CD4-positive, alpha-beta memory T cell (primary cell): ENCODE measurements at regions of chr20 and their contacts with region 1.

Region 1: GRCh38 chr20:37527638-37528441 is at the start of gene BLCAP:
- DNase-seq: peak; percentile 96 to 97 (median 96)
- H3K4me3 ChIP-seq: peak within 1 kb of the TSS; percentile 90 to 100
- H3K4me3 Mint-ChIP-seq: peak within 1 kb of the TSS; percentile 86 to 96 (median 90)
- H3K27ac ChIP-seq: peak within 1 kb of the TSS; percentile 99
- H3K27ac Mint-ChIP-seq: peak within 1 kb of the TSS; percentile 98 to 100 (median 99)
- H3K4me1 ChIP-seq: peaks cover 37% of the 10 kb centered on the region
- H3K4me1 Mint-ChIP-seq: peaks cover 32 to 60% (median 47%) of the 10 kb centered on the region in 4 donors
- H3K27me3 ChIP-seq: no peaks in the 10 kb centered on the region
- H3K27me3 Mint-ChIP-seq: no peaks in the 10 kb centered on the region
- total RNA-seq, gene BLCAP: 81.7 to 87.5 TPM

Region 2: DNA sequence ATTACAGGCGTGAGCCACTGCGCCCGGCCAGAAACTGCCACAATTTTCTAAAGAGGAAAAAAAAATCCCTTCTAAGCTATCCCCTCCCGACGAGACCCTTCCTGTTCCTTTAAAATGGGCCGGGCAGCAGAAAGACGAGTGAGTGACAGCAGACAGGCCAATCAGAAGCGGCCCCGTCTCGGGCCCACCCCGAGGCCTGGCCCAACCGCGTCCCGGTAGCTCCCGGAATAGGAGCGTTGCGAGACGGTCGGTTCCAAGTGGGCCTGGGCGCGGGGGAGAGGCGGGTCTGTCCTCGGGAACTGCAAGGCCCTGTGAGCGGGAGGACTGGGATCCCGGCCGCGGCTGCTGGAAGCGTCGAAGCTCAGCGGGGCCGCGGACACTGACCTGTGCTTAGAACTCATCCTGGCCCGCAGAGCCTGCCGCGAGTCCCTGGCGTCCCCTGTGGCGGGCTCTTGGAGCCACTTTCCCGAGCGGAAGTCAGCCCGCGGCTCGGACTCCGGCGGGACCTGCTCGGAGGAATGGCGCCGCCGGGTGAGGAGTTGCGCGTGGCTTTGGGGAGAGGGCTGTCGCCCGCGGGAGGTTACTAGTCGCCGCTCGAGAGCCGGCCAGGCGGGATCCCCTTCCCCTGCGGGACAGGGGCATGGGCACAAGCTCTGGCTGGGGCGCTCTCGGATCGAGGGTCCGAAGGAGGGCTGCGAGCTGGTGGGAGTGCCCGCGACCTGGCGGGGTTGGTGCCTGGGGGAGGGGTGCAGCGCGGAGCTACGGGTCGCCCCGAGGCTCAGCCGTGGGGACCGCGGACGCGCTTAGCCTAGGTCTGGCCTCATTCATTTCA is 348.8 kb before region 1 on chr20 and contains the starts of genes MROH8 and RPN2:
- CTCF ChIA-PET with region 1: no interaction called
- POLR2A ChIA-PET with region 1: interaction called, 12 read pairs
- intact Hi-C with region 1: loop called (anchors 1 kb)
- DNase-seq: peak; percentile 92 to 96 (median 93)
- H3K4me3 ChIP-seq: peak within 1 kb of the TSS; percentile 96 to 97
- H3K4me3 Mint-ChIP-seq: peak within 1 kb of the TSS; percentile 92 to 99 (median 98)
- H3K27ac ChIP-seq: peak within 1 kb of the TSS; percentile 92
- H3K27ac Mint-ChIP-seq: peak within 1 kb of the TSS; percentile 96 to 98 (median 98)
- H3K4me1 ChIP-seq: peaks cover 46% of the 10 kb centered on the region
- H3K4me1 Mint-ChIP-seq: peaks cover 29 to 58% (median 43%) of the 10 kb centered on the region in 4 donors
- H3K27me3 ChIP-seq: no peaks in the 10 kb centered on the region
- H3K27me3 Mint-ChIP-seq: peaks cover 0 to 2% of the 10 kb centered on the region in 2 donors
- total RNA-seq, gene MROH8: 1.4 to 1.5 TPM
- total RNA-seq, gene RPN2: 125 to 127 TPM

Region 3: DNA sequence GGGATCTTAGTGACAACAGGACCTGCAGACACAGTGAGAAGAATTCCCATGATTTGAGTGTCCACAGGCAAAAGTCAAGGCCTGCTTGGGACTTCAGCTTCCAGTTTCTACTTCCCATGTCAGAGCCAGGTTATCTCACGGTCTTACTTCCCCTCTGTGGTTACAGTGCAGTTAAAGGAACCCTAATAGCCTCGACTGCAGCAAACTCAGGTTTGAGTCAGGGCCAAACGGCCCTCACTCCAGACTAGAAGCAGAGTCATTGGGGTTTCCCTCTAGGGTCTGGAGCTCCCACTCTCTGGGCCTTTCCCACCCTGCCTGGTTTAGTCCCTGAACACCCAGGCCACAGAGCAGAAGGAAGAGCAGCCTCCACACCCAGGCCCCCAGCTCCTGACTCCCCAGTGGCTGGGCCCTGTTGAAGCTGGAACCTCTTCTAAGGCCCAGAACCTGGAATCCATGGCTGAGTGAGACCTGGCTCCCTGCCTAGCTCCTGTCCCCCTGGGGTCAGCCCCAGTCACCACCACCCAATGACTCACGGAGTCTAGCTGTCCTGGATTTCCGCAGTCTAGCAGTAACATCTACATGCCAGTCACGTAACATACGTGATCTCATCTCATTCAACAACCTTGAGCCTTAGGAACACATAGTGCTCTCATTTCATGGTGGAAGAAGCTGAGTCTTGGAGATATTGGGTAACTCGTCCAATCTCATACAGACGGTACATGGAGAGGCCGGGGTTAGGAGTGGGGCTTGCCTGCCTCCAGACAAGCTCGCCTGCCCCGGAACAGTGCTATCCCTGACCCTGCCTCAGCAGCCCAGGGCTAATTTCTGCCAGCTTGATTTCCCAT is 257.0 kb before region 1 on chr20:
- CTCF ChIA-PET with region 1: interaction called, 113 read pairs
- POLR2A ChIA-PET with region 1: no interaction called
- intact Hi-C with region 1: loop called (anchors 2 kb)
- DNase-seq: no peak
- H3K4me3 ChIP-seq: no peak overlapping the region
- H3K4me3 Mint-ChIP-seq: no peak overlapping the region
- H3K27ac ChIP-seq: no peak overlapping the region
- H3K27ac Mint-ChIP-seq: no peak overlapping the region
- H3K4me1 ChIP-seq: no peaks in the 10 kb centered on the region
- H3K4me1 Mint-ChIP-seq: no peaks in the 10 kb centered on the region
- H3K27me3 ChIP-seq: no peaks in the 10 kb centered on the region
- H3K27me3 Mint-ChIP-seq: no peaks in the 10 kb centered on the region

Region 4: GRCh38 chr20:37288091-37288490 is 239.7 kb before region 1 on chr20:
- CTCF ChIA-PET with region 1: interaction called, 7 read pairs
- POLR2A ChIA-PET with region 1: interaction called, 12 read pairs
- intact Hi-C with region 1: loop called (anchors 5 kb)
- DNase-seq: no peak
- H3K4me3 ChIP-seq: no peak overlapping the region
- H3K4me3 Mint-ChIP-seq: peak overlapping the region in 6 of 8 donors; percentile 21 to 83 (median 74)
- H3K27ac ChIP-seq: no peak overlapping the region
- H3K27ac Mint-ChIP-seq: peak overlapping the region in 4 of 7 donors; percentile 42 to 89 (median 75)
- H3K4me1 ChIP-seq: peaks cover 15% of the 10 kb centered on the region
- H3K4me1 Mint-ChIP-seq: peaks cover 15 to 33% (median 24%) of the 10 kb centered on the region in 4 donors
- H3K27me3 ChIP-seq: no peaks in the 10 kb centered on the region
- H3K27me3 Mint-ChIP-seq: peaks cover 2 to 10% of the 10 kb centered on the region in 2 donors

Region 5: DNA sequence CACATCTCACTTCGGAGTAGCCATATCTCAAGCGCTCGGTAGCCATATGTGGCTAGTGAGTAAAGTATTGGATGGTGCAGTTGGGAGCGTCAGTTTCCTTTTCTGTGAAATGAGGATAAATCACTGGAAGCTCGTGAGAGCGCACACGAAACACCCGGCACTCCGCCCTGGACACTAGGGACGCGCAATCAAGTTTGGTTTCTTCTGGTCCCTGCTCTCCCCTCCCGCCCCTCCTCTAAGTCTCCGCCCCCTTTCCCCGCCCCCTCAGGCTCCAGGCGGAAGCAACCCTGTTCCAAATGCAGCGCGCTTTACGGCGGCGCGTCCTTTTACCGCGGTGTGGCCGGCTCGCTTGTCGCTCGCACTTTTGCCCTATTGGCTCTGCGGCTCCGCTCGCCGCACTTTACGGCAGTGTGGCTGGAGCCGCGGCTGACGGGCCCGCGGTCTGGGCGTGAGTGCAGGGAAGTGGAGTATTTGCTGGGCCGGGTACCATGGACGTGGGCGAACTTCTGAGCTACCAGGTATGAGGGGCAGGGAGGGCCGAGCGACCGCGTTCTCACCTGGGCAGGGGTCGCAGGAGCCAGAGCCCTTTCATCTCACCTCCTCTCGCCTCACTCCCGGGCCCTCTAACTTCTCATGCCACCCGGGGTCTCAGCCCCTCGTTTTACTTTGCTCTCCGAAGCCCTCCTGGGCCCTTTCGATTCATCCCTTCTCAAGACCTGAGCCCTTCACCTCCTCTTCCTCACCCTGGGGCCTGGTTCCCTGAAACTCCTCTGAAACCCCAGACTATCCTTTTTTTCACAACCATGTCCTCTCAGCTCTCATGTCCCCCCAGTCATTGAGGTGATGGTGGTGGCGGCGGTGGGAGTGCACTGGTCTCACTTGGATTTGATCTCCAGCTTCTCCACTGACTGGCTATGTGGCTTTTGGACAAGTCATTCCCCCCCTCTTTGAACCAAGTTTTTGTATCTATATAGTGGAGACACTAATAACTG is 166.1 kb after region 1 on chr20 and contains the start of gene CTNNBL1:
- CTCF ChIA-PET with region 1: no interaction called
- POLR2A ChIA-PET with region 1: no interaction called
- intact Hi-C with region 1: loop called (anchors 5 kb)
- DNase-seq: peak; percentile 92 to 96 (median 93)
- H3K4me3 ChIP-seq: peak within 1 kb of the TSS; percentile 71 to 90
- H3K4me3 Mint-ChIP-seq: peak within 1 kb of the TSS; percentile 94 to 99 (median 97)
- H3K27ac ChIP-seq: peak within 1 kb of the TSS; percentile 76
- H3K27ac Mint-ChIP-seq: peak within 1 kb of the TSS; percentile 82 to 99 (median 94)
- H3K4me1 ChIP-seq: peaks cover 25% of the 10 kb centered on the region
- H3K4me1 Mint-ChIP-seq: peaks cover 18 to 46% (median 31%) of the 10 kb centered on the region in 4 donors
- H3K27me3 ChIP-seq: peaks cover 5% of the 10 kb centered on the region
- H3K27me3 Mint-ChIP-seq: peaks cover 11 to 16% of the 10 kb centered on the region in 2 donors
- total RNA-seq, gene CTNNBL1: 41.5 to 45.1 TPM

Region 6: DNA sequence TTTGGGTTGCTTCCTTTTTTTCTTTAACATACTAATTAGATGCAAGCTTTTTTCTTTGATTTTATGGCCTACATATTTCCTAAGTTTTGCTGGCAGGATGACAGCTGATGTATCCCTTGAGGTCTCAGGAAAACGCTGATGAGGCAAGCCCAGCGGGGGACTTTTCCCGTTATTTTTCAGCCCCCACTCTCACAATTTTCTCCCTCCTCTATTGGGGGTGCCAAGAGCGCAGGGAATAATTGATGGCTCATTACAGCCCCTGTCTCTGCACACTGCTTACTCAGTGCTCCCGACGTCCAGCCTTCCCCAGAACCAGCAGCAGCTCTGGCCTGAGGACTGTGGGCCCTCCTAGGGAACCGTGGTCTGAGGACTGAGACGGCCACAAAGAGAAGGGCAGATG is 336.5 kb after region 1 on chr20:
- CTCF ChIA-PET with region 1: no interaction called
- POLR2A ChIA-PET with region 1: no interaction called
- intact Hi-C with region 1: no loop called
- DNase-seq: no peak
- H3K4me3 ChIP-seq: no peak overlapping the region
- H3K4me3 Mint-ChIP-seq: no peak overlapping the region
- H3K27ac ChIP-seq: no peak overlapping the region
- H3K27ac Mint-ChIP-seq: peak overlapping the region in 1 of 7 donors; percentile 63
- H3K4me1 ChIP-seq: no peaks in the 10 kb centered on the region
- H3K4me1 Mint-ChIP-seq: no peaks in the 10 kb centered on the region
- H3K27me3 ChIP-seq: no peaks in the 10 kb centered on the region
- H3K27me3 Mint-ChIP-seq: no peaks in the 10 kb centered on the region